H1 (cell line): ENCODE measurements at regions of chr14 and their contacts with region 1.

Region 1: DNA sequence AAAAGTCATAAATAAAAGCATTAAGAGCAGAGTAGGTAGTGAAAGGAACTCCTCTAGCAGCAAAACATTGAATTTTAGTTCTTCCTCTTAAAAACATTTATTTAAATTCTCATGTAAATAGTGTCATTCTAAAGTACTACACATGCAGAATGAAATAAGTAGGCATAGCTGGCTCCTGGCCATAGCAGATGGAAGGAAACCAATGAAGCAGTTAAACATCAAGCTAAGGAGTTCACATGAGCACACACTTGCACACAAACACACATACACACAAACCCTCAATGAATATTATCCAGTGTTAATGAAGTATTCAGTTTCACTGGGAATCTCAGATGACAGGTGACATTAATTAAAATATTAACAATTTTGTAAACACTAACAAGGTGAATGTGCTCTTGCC is 69.3 kb downstream of the SLC35F4 start:
- DNase-seq: no peak
- H3K4me3 ChIP-seq: no peak overlapping the region
- H3K27ac ChIP-seq: no peak overlapping the region
- H3K4me1 ChIP-seq: peaks cover 0 to 3% (median 0%) of the 10 kb centered on the region in 4 experiments; a peak in 2 of 7 replicates
- H3K27me3 ChIP-seq: no peaks in the 10 kb centered on the region
- CTCF ChIP-seq: no peak
- EP300 ChIP-seq: no peak
- POLR2A ChIP-seq: no peak
- RAD21 ChIP-seq: no peak

Region 2: GRCh38 chr14:57785058-57785457 is 11.5 kb before region 1 on chr14:
- CTCF ChIA-PET with region 1: interaction called, 17 read pairs
- POLR2A ChIA-PET with region 1: no interaction called
- DNase-seq: no peak
- H3K4me3 ChIP-seq: no peak overlapping the region
- H3K27ac ChIP-seq: no peak overlapping the region
- H3K4me1 ChIP-seq: no peaks in the 10 kb centered on the region
- H3K27me3 ChIP-seq: no peaks in the 10 kb centered on the region
- CTCF ChIP-seq: no peak
- EP300 ChIP-seq: no peak
- POLR2A ChIP-seq: no peak
- RAD21 ChIP-seq: no peak